GM13976 (cell line): ENCODE measurements at regions of chr9 and their contacts with region 1.

Region 1: GRCh38 chr9:96449845-96450612 is at the start of gene HABP4:
- DNase-seq: peak; percentile 98
- CTCF ChIP-seq: no peak

Region 2: GRCh38 chr9:96279960-96280359 is 170.1 kb before region 1 on chr9:
- in situ Hi-C with region 1: no loop called
- DNase-seq: no peak
- CTCF ChIP-seq: no peak

Region 3: DNA sequence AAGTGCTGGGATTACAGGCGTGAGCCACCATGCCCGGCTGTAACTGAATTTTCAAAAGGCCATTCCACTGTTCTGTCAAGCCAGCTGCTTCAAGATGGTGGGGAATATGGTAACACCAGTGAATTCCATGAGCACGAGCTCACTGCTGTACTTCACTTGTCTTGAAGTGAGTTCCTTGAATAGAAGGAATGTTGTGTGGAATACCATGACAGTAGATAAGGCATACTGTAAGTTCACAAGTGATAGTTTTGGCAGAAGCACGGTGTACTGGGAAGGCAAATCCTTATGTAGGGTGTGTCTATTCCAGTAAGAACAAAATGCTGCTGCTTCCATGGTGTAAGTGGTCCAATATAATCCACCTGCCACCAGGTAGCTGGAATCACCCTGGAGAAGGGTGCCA is 211.7 kb after region 1 on chr9:
- in situ Hi-C with region 1: loop called (anchors 10 kb)
- DNase-seq: no peak
- CTCF ChIP-seq: no peak